ENCODE measurements at regions of chr5 and their contacts with region 1.

Region 1: GRCh38 chr5:126339215-126339805 is 83.9 kb upstream of the GRAMD2B start:
- DNase-seq: peak in 1 of 2 experiments; percentile 53
- H3K4me3 ChIP-seq: no peak overlapping the region
- H3K4me3 Mint-ChIP-seq: no peak overlapping the region
- H3K27ac Mint-ChIP-seq: no peak overlapping the region
- H3K4me1 ChIP-seq: no peaks in the 10 kb centered on the region
- H3K4me1 Mint-ChIP-seq: no peaks in the 10 kb centered on the region
- H3K27me3 ChIP-seq: no peaks in the 10 kb centered on the region
- H3K27me3 Mint-ChIP-seq: peaks cover 2% of the 10 kb centered on the region
- CTCF ChIP-seq: peak; percentile 73 to 75

Region 2: DNA sequence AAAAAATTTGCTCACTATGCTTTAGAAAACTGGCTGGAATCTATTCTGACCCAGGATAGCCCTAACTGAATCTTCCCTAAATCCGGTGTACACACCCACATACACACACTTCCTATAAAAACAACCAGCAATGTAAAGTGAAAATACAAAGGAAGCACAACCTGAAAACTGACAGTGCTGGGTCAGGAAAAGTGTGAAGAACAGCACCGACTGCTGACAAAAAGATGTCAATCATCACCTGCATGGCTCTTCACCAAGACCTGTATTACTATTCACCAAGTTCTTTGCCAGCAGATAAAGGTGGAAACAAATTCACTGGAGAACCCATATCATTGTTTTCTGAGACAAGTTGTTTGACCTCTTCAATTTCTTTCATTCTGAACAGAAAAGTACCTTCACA is 209.9 kb before region 1 on chr5:
- CTCF ChIA-PET with region 1: no interaction called
- POLR2A ChIA-PET with region 1: no interaction called
- intact Hi-C with region 1: no loop called
- DNase-seq: no peak
- H3K4me3 ChIP-seq: no peak overlapping the region
- H3K4me3 Mint-ChIP-seq: no peak overlapping the region
- H3K27ac Mint-ChIP-seq: no peak overlapping the region
- H3K4me1 ChIP-seq: no peaks in the 10 kb centered on the region
- H3K4me1 Mint-ChIP-seq: no peaks in the 10 kb centered on the region
- H3K27me3 ChIP-seq: no peaks in the 10 kb centered on the region
- H3K27me3 Mint-ChIP-seq: no peaks in the 10 kb centered on the region
- CTCF ChIP-seq: peak in 1 of 2 experiments; percentile 9

Region 3: DNA sequence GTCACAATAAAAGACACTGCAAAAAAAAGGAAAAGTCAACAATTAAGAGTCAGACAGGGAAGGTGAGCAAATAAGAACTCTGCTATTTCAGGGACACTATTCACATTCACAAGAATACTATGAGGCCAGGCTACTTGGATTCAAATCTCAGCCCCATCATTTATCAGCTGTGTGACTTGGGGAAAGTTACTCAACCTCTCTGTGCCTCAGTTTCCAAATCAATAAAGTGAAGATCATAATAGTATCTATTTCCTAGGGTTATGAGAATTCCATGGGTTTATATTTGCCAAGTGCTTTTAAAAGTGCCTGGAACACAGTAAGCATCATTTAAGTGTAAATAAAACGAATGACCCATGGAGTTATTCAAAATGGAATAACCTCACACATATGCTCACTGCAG is 199.3 kb after region 1 on chr5:
- CTCF ChIA-PET with region 1: interaction called, 12 read pairs
- POLR2A ChIA-PET with region 1: no interaction called
- intact Hi-C with region 1: loop called (anchors 1 kb)
- DNase-seq: no peak
- H3K4me3 ChIP-seq: no peak overlapping the region
- H3K4me3 Mint-ChIP-seq: no peak overlapping the region
- H3K27ac Mint-ChIP-seq: no peak overlapping the region
- H3K4me1 ChIP-seq: no peaks in the 10 kb centered on the region
- H3K4me1 Mint-ChIP-seq: no peaks in the 10 kb centered on the region
- H3K27me3 ChIP-seq: no peaks in the 10 kb centered on the region
- H3K27me3 Mint-ChIP-seq: no peaks in the 10 kb centered on the region
- CTCF ChIP-seq: no peak

Region 4: GRCh38 chr5:126544087-126544740 is 204.9 kb after region 1 on chr5:
- CTCF ChIA-PET with region 1: interaction called, 12 read pairs
- POLR2A ChIA-PET with region 1: no interaction called
- intact Hi-C with region 1: loop called (anchors 1 kb)
- DNase-seq: peak; percentile 55 to 59
- H3K4me3 ChIP-seq: no peak overlapping the region
- H3K4me3 Mint-ChIP-seq: no peak overlapping the region
- H3K27ac Mint-ChIP-seq: no peak overlapping the region
- H3K4me1 ChIP-seq: 0 out of 2 replicates have a peak, but pooled peaks cover 3% of the 10 kb centered on the region
- H3K4me1 Mint-ChIP-seq: no peaks in the 10 kb centered on the region
- H3K27me3 ChIP-seq: no peaks in the 10 kb centered on the region
- H3K27me3 Mint-ChIP-seq: no peaks in the 10 kb centered on the region
- CTCF ChIP-seq: peak; percentile 55 to 62

Region 5: DNA sequence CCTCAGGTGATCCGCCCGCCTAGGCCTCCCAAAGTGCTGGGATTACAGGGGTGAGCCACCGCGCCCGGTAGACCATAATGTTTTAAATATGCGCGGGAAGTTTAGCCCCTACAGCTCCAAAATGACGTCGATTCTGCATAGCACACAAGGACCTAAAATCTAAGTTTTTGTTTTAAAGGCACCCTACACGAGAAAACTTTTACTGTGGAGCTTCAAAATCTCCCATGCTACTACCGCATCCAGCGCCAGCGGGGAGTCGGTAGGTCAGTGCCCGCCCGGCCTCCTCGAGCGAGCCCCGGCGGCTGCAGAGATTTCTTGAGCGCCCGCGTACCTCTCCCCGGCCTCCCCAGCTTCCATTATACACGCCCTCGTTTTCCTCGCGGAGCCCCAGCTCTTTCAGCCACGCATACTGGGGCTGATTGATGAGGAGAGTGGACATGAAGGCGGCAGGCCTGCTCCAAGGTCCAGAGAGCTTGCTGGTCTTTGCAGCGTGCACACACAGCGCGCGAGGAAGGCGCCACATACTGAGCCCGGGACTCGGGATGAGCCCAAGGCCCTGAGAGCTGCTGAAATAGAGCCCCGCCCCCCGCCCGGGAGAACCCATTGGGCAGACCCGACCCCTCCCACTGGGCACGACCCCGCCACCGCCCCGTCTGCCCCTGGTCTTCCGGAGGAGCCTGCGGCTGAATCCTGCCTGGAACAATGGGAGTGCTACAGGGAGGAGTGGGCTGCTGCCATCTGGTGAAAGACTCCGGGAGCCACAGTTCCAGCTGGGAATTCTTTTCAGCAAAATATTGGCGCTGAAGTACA is 255.6 kb after region 1 on chr5 and contains the start of gene ALDH7A1:
- CTCF ChIA-PET with region 1: interaction called, 5 read pairs
- POLR2A ChIA-PET with region 1: no interaction called
- intact Hi-C with region 1: loop called (anchors 1 kb)
- DNase-seq: peak; percentile 97 to 98
- H3K4me3 ChIP-seq: peak within 1 kb of the TSS; percentile 66
- H3K4me3 Mint-ChIP-seq: peak within 1 kb of the TSS; percentile 93
- H3K27ac Mint-ChIP-seq: peak within 1 kb of the TSS; percentile 91
- H3K4me1 ChIP-seq: peaks cover 20% of the 10 kb centered on the region
- H3K4me1 Mint-ChIP-seq: peaks cover 22% of the 10 kb centered on the region
- H3K27me3 ChIP-seq: no peaks in the 10 kb centered on the region
- H3K27me3 Mint-ChIP-seq: no peaks in the 10 kb centered on the region
- CTCF ChIP-seq: peak; percentile 27 to 77
- total RNA-seq, gene ALDH7A1: 192 and 204 TPM in 2 replicates

Region 6: GRCh38 chr5:126600631-126601511 is 261.6 kb after region 1 on chr5 and contains the start of gene PHAX:
- CTCF ChIA-PET with region 1: no interaction called
- POLR2A ChIA-PET with region 1: no interaction called
- intact Hi-C with region 1: loop called (anchors 1 kb)
- DNase-seq: peak; percentile 77 to 89
- H3K4me3 ChIP-seq: peak within 1 kb of the TSS; percentile 100
- H3K4me3 Mint-ChIP-seq: peak within 1 kb of the TSS; percentile 72
- H3K27ac Mint-ChIP-seq: peak within 1 kb of the TSS; percentile 64
- H3K4me1 ChIP-seq: peaks cover 9% of the 10 kb centered on the region; the same call in 1 of the 2 replicates
- H3K4me1 Mint-ChIP-seq: peaks cover 18% of the 10 kb centered on the region
- H3K27me3 ChIP-seq: no peaks in the 10 kb centered on the region
- H3K27me3 Mint-ChIP-seq: no peaks in the 10 kb centered on the region
- CTCF ChIP-seq: peak; percentile 45 to 73
- total RNA-seq, gene PHAX: 38.7 and 41.3 TPM in 2 replicates

Measured in Caco-2 (cell line).